T-cell (primary cell): ENCODE measurements at regions of chr15 and their contacts with region 1.

Region 1: GRCh38 chr15:58770857-58771620 is at the start of gene MINDY2:
- DNase-seq: peak; percentile 83 to 97 (median 92)
- ATAC-seq: peak; percentile 93 to 98 (median 96)
- H3K4me3 ChIP-seq: peak within 1 kb of the TSS; percentile 80 to 87
- H3K4me3 Mint-ChIP-seq: peak within 1 kb of the TSS in 1 of 3 donors; percentile 92
- H3K27ac ChIP-seq: peak within 1 kb of the TSS; percentile 80
- H3K27ac Mint-ChIP-seq: peak within 1 kb of the TSS; percentile 92 to 94
- H3K4me1 ChIP-seq: peaks cover 27 to 28% of the 10 kb centered on the region in 2 experiments
- H3K4me1 Mint-ChIP-seq: peaks cover 9 to 15% (median 10%) of the 10 kb centered on the region in 3 donors
- H3K27me3 ChIP-seq: no peaks in the 10 kb centered on the region
- H3K27me3 Mint-ChIP-seq: no peaks in the 10 kb centered on the region
- total RNA-seq, gene MINDY2: 11.7 to 17.9 (median 15.9) TPM

Region 2: GRCh38 chr15:58269455-58270414 is 501.3 kb before region 1 on chr15:
- CTCF ChIA-PET with region 1: no interaction called
- POLR2A ChIA-PET with region 1: interaction called in 1 of 2 experiments, 13 read pairs
- DNase-seq: peak in 20 of 35 experiments; percentile 2 to 62 (median 14)
- ATAC-seq: peak; percentile 57 to 71 (median 64)
- H3K4me3 ChIP-seq: no peak overlapping the region
- H3K4me3 Mint-ChIP-seq: no peak overlapping the region
- H3K27ac ChIP-seq: no peak overlapping the region
- H3K27ac Mint-ChIP-seq: peak overlapping the region; percentile 39
- H3K4me1 ChIP-seq: peaks cover 4 to 7% of the 10 kb centered on the region in 2 experiments
- H3K4me1 Mint-ChIP-seq: peaks cover 9 to 12% (median 10%) of the 10 kb centered on the region in 3 donors
- H3K27me3 ChIP-seq: no peaks in the 10 kb centered on the region
- H3K27me3 Mint-ChIP-seq: no peaks in the 10 kb centered on the region

Region 3: GRCh38 chr15:58639992-58640391 is 131.0 kb before region 1 on chr15:
- CTCF ChIA-PET with region 1: no interaction called
- POLR2A ChIA-PET with region 1: no interaction called
- DNase-seq: no peak
- ATAC-seq: no peak
- H3K4me3 ChIP-seq: no peak overlapping the region
- H3K4me3 Mint-ChIP-seq: no peak overlapping the region
- H3K27ac ChIP-seq: no peak overlapping the region
- H3K27ac Mint-ChIP-seq: peak overlapping the region; percentile 74 to 81
- H3K4me1 ChIP-seq: no peaks in the 10 kb centered on the region
- H3K4me1 Mint-ChIP-seq: peaks cover 5 to 15% (median 13%) of the 10 kb centered on the region in 3 donors
- H3K27me3 ChIP-seq: no peaks in the 10 kb centered on the region
- H3K27me3 Mint-ChIP-seq: no peaks in the 10 kb centered on the region

Region 4: GRCh38 chr15:58724466-58724865 is 46.6 kb before region 1 on chr15:
- CTCF ChIA-PET with region 1: no interaction called
- POLR2A ChIA-PET with region 1: no interaction called
- DNase-seq: peak in 3 of 35 experiments; percentile 14 to 33 (median 16)
- ATAC-seq: peak in 3 of 4 experiments; percentile 37 to 78 (median 53)
- H3K4me3 ChIP-seq: no peak overlapping the region
- H3K4me3 Mint-ChIP-seq: no peak overlapping the region
- H3K27ac ChIP-seq: no peak overlapping the region
- H3K27ac Mint-ChIP-seq: peak overlapping the region; percentile 3 to 7
- H3K4me1 ChIP-seq: peaks cover 8% of the 10 kb centered on the region in 2 experiments
- H3K4me1 Mint-ChIP-seq: peaks cover 59 to 71% (median 62%) of the 10 kb centered on the region in 3 donors
- H3K27me3 ChIP-seq: no peaks in the 10 kb centered on the region
- H3K27me3 Mint-ChIP-seq: no peaks in the 10 kb centered on the region

Region 5: DNA sequence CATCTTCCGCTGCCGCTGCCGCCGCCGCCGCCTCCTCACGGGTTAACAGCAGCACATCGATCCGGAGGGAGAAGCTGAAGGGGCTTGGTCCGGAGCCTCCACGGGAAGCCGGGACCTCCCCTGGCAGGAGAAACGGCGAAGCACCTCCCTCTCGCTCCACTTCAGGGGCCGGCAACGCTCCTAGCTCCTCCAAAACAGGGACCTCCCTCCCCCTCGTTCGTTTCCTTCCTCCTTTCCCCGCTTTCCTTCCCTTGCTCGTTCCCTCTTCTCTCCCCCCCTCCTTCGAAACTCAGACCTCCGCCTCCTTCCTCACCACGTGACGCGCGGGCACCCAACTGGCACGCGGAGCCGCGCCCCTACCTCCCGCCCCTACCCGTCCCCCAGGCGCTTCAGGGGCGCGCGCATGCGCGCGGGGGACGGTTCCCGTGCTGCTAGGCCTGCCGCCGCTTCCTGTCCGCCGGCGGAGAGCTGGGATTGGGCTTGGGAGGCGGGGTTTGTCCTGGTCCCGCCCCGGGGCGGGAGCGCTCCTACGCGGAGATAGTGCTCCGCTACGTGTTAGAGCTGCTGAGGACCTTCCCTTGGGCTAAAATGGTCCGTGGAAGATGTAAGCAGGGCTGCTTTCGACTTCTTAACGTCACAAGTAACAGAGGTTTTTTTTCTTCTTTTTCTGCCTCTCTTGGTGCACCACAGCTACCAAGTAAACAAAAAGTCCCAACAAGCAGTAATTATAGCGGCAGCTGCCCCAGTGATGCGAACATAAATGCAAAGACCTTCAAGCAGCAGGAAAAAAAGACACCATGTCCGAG is 21.3 kb before region 1 on chr15 and contains the start of gene ADAM10:
- CTCF ChIA-PET with region 1: interaction called, 3 to 35 read pairs
- POLR2A ChIA-PET with region 1: interaction called, 7 to 23 read pairs
- DNase-seq: peak; percentile 88 to 98 (median 97)
- ATAC-seq: peak; percentile 93 to 95 (median 94)
- H3K4me3 ChIP-seq: peak within 1 kb of the TSS; percentile 94 to 99
- H3K4me3 Mint-ChIP-seq: peak within 1 kb of the TSS; percentile 92 to 98 (median 93)
- H3K27ac ChIP-seq: peak within 1 kb of the TSS; percentile 88
- H3K27ac Mint-ChIP-seq: peak within 1 kb of the TSS; percentile 89 to 91
- H3K4me1 ChIP-seq: peaks cover 15 to 20% of the 10 kb centered on the region in 2 experiments
- H3K4me1 Mint-ChIP-seq: peaks cover 39 to 43% (median 43%) of the 10 kb centered on the region in 3 donors
- H3K27me3 ChIP-seq: no peaks in the 10 kb centered on the region
- H3K27me3 Mint-ChIP-seq: no peaks in the 10 kb centered on the region
- total RNA-seq, gene ADAM10: 99.5 to 146 (median 113) TPM

Region 6: GRCh38 chr15:59632714-59633113 is 861.7 kb after region 1 on chr15:
- CTCF ChIA-PET with region 1: no interaction called
- POLR2A ChIA-PET with region 1: interaction called, 4 to 13 read pairs
- DNase-seq: no peak
- ATAC-seq: no peak
- H3K4me3 ChIP-seq: no peak overlapping the region
- H3K4me3 Mint-ChIP-seq: no peak overlapping the region
- H3K27ac ChIP-seq: no peak overlapping the region
- H3K27ac Mint-ChIP-seq: no peak overlapping the region
- H3K4me1 ChIP-seq: no peaks in the 10 kb centered on the region
- H3K4me1 Mint-ChIP-seq: no peaks in the 10 kb centered on the region
- H3K27me3 ChIP-seq: peaks cover 0 to 11% of the 10 kb centered on the region in 2 experiments
- H3K27me3 Mint-ChIP-seq: no peaks in the 10 kb centered on the region